ENCODE measurements at regions of chr1 and their contacts with region 1.

Region 1: GRCh38 chr1:167973832-167974231 is 37.0 kb upstream of the MPC2 start:
- DNase-seq: no peak
- H3K4me3 ChIP-seq: no peak overlapping the region
- H3K27ac ChIP-seq: no peak overlapping the region
- H3K4me1 ChIP-seq: no peaks in the 10 kb centered on the region
- H3K27me3 ChIP-seq: no peaks in the 10 kb centered on the region
- CTCF ChIP-seq: no peak

Region 2: DNA sequence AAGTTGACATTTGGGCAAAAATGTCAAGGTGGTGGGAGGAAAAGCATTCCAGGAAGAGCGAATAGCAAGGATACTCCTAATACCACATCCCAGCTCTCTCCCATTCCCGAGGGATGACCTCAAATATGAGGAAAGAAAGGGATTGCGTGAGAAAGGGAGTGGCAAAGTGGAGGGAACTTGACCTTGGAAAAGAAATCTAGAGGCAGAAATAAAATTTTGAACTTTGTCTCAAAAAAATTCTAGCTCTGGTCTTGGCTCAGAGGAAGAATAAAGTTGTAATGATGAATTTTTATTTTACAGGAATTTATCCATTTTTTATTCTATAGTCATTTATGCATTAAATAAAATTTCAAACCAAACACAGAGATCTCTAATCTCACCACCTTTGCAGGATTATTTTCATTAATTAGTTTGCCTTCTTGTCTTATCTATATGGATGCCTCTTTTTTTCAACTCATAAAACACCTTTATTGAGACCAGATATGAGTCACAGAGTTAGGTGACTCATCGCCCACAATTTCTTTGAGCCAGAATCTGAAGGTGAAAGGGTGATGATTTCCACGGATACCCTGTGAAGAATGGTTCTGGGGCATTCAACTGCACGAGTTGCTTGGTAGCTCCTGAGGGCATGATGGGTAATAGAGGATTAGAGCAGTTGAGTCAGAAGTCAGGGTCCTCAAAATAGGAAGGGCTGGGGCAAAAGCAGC is 434.9 kb after region 1 on chr1:
- CTCF ChIA-PET with region 1: no interaction called
- POLR2A ChIA-PET with region 1: interaction called, 10 read pairs
- intact Hi-C with region 1: no loop called
- DNase-seq: no peak
- H3K4me3 ChIP-seq: no peak overlapping the region
- H3K27ac ChIP-seq: no peak overlapping the region
- H3K4me1 ChIP-seq: no peaks in the 10 kb centered on the region
- H3K27me3 ChIP-seq: no peaks in the 10 kb centered on the region
- CTCF ChIP-seq: no peak

Measured in A673 (cell line).